Left cardiac atrium (tissue), 4 donors: ENCODE measurements at regions of chr16 and their contacts with region 1.

Region 1: DNA sequence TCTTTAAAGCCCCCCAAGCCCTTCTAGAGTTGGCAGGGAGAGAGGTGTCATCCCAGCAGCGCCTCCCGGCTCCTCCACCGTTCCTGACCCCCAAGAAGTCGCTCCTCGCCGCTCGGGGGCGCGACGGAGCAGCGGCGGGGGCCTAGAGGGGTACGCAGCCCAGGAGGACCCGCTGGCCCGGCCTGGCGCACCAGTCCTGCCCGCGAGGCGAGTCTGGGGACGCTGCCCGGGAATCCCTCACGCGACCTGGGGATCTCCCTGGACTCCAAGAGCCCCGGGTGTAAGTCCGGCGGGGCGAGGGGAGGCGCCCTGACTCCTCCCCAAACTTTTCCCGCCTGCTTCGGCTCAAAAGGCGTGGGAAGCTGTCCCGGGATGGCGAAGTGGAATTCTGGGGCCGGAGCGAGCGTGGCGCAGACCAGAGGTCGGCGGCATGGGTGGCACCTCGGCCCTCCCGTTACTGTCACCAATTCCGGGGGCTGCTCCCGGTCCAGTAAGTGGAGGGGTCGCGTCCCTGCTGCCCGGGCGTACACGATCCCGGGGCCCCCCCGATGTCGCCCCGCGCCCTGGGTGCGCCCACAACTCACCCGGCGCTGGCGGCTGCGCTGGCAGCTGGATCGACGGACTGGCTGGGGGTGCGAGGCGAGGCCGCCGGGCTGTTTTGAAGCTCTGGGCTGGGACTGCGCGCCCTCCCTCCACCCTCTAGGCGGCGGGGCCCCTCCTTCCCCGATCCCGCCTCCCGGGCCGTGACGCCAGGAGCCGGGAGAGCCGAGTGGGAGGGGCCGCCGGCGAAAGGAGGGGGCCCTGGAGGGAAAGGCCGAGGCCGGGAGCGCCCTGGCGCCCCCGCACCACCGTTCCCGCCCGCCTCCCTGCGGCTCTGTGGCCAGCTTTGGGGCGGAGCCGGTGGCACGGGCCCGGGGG is at the start of gene EMP2:
- DNase-seq: peak; percentile 90
- ATAC-seq: peak; percentile 87 to 93
- total RNA-seq, gene EMP2: 63.4 to 65.2 TPM

Region 2: DNA sequence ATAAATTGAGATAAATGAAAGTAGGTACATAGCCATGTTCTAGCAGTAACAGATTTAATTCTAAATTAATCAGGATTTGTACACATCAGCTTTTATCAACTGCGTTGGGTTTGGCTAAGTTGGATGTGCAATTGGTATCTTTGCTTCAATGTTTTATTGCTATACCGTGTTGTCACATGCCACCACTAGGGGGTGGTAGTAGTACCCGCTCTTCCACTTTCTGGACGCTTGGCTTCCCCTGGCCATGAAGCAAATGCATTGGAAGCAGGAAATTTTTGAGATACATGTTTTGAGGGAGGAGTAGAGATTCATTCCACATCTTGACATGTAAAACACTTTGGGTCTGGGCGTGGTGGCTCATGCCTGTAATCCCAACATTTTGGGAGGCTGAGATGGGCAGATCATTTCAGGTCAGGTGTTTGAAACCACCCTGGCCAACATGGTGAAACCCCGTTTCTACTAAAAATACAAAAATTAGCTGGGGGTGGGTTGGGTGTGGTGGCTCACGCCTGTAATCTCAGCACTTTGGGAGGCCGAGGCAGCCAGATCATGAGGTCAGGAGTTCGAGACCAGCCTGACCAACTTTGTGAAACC is 58.4 kb before region 1 on chr16:
- intact Hi-C with region 1: loop called in 1 of 2 experiments (anchors 10 kb)
- DNase-seq: peak; percentile 51
- ATAC-seq: peak; percentile 79 to 82

Region 3: GRCh38 chr16:10616730-10617555 is 36.7 kb after region 1 on chr16:
- intact Hi-C with region 1: loop called in 1 of 2 experiments (anchors 5 kb)
- DNase-seq: peak; percentile 84
- ATAC-seq: peak; percentile 56 to 74

Region 4: GRCh38 chr16:10652730-10653590 is 72.7 kb after region 1 on chr16:
- intact Hi-C with region 1: no loop called
- DNase-seq: peak; percentile 28
- ATAC-seq: peak; percentile 41 to 94

Region 5: GRCh38 chr16:10937068-10937859 is 357.0 kb after region 1 on chr16:
- intact Hi-C with region 1: loop called in 1 of 2 experiments (anchors 10 kb)
- DNase-seq: no peak
- ATAC-seq: no peak